Brain microvascular endothelial cell (primary cell): ENCODE measurements at regions of chr4 and their contacts with region 1.

Region 1: GRCh38 chr4:127622921-127623656 is 9.7 kb upstream of the INTU start:
- DNase-seq: peak; percentile 29
- H3K4me3 ChIP-seq: peak overlapping the region; percentile 73
- H3K27ac ChIP-seq: peak overlapping the region; percentile 9
- H3K27me3 ChIP-seq: no peaks in the 10 kb centered on the region
- CTCF ChIP-seq: peak; percentile 60

Region 2: DNA sequence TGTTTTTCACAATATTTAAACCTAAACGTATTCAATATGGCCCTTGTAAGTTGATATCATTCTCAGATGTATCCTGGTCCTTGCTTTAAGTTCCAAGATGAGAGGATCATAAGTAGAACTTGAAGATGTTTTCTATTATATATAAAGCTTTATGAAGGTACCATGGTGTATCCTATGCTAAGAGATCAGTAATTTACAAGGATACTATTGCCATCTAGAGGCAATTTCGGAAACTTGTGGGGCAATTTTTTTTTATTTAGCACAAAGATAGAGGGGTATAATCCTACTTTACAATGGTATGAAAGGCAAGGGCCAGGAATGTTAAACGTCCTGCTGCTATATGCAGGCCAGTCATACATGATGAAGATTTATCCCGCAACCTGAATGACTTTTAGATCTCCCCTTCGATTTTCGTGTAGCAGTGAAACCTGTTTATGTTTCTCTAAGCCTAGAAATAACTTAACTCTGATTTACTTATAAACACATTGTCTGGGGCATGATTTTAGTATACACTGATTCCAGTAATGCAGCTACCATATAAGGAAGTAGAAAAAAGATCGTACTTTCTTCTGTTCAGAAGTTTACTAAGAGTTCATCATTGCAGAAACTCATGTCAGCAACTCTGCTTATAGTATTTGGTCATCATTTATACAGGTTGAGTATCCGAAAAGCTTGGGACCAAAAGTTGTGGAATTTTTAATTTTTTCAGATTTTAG is 109.7 kb after region 1 on chr4:
- in situ Hi-C with region 1: loop called (anchors 25 kb)
- DNase-seq: peak; percentile 31
- H3K4me3 ChIP-seq: no peak overlapping the region
- H3K27ac ChIP-seq: no peak overlapping the region
- H3K27me3 ChIP-seq: no peaks in the 10 kb centered on the region
- CTCF ChIP-seq: peak; percentile 30

Region 3: DNA sequence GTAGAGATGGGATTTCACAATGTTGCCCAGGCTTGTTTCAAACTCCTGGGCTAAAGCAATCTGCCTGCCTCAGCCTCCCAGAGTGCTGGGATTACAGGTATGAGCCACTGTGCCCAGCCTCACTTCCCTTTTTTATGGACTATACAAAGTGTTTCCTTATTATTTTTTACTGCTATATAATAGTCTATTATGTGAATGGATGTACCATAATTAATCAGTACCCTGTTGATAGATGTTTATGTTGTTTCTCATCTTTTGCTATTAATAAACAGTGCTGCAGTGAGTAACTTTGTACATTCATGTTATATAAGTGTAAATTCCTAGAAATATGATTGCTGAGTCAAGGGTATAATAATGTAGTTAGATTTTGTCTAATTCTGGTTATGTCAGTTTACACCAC is 402.2 kb after region 1 on chr4:
- in situ Hi-C with region 1: no loop called
- DNase-seq: no peak
- H3K4me3 ChIP-seq: no peak overlapping the region
- H3K27ac ChIP-seq: no peak overlapping the region
- H3K27me3 ChIP-seq: no peaks in the 10 kb centered on the region
- CTCF ChIP-seq: no peak